ENCODE measurements at regions of chr1 and their contacts with region 1.

Region 1: DNA sequence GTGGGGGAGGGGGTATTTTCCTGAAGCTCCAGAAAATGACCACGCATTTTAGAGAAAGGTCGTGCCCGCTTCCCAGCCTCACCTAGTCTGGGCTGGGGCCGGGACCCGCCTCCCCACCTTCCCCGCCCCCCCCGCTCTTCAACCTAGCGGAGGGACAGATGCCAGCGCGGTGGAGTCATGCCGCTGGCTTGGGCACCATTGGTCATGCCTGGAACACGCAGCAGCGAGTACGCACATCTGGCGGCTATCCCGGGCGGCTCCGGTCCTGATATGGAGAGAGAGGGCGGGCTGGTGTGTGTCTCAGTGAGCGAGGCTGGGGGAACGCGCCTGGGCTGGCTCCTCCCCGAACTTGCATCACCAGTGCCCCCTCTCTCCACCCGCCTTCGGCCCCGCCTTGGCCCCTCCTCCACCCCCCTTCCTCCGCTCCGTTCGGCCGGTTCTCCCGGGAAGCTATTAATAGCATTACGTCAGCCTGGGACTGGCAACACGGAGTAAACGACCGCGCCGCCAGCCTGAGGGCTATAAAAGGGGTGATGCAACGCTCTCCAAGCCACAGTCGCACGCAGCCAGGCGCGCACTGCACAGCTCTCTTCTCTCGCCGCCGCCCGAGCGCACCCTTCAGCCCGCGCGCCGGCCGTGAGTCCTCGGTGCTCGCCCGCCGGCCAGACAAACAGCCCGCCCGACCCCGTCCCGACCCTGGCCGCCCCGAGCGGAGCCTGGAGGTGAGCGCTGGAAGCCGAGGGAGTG is at the start of gene ATF3:
- DNase-seq: peak; percentile 100
- ATAC-seq: peak; percentile 93 to 97 (median 94)
- H3K4me3 ChIP-seq: peak within 1 kb of the TSS; percentile 81
- H3K27ac ChIP-seq: peak within 1 kb of the TSS; percentile 87
- H3K4me1 ChIP-seq: peaks cover 24% of the 10 kb centered on the region
- H3K27me3 ChIP-seq: peaks cover 0 to 38% (median 13%) of the 10 kb centered on the region in 3 donors
- CTCF ChIP-seq: no peak
- total RNA-seq, gene ATF3: 13.5 to 51.3 (median 26.3) TPM

Region 2: GRCh38 chr1:212488397-212489283 is 119.7 kb before region 1 on chr1:
- intact Hi-C with region 1: loop called in 1 of 2 experiments (anchors 10 kb)
- DNase-seq: peak; percentile 43 to 62
- ATAC-seq: peak; percentile 53 to 78 (median 70)
- H3K4me3 ChIP-seq: no peak overlapping the region
- H3K27ac ChIP-seq: peak overlapping the region; percentile 24
- H3K4me1 ChIP-seq: no peaks in the 10 kb centered on the region
- H3K27me3 ChIP-seq: no peaks in the 10 kb centered on the region
- CTCF ChIP-seq: no peak

Region 3: GRCh38 chr1:212558693-212559480 is 49.5 kb before region 1 on chr1:
- intact Hi-C with region 1: loop called in 1 of 2 experiments (anchors 5 kb)
- DNase-seq: peak; percentile 93 to 95
- ATAC-seq: peak; percentile 91 to 97 (median 94)
- H3K4me3 ChIP-seq: peak overlapping the region; percentile 83
- H3K27ac ChIP-seq: peak overlapping the region; percentile 83
- H3K4me1 ChIP-seq: peaks cover 4% of the 10 kb centered on the region
- H3K27me3 ChIP-seq: peaks cover 0 to 2% (median 0%) of the 10 kb centered on the region in 3 donors
- CTCF ChIP-seq: no peak

Region 4: GRCh38 chr1:212566522-212567479 is 41.6 kb before region 1 on chr1:
- intact Hi-C with region 1: loop called (anchors 1 to 5 kb)
- DNase-seq: no peak
- ATAC-seq: peak; percentile 86 to 94 (median 90)
- H3K4me3 ChIP-seq: peak overlapping the region; percentile 75
- H3K27ac ChIP-seq: peak overlapping the region; percentile 76
- H3K4me1 ChIP-seq: peaks cover 15% of the 10 kb centered on the region
- H3K27me3 ChIP-seq: peaks cover 0 to 2% (median 0%) of the 10 kb centered on the region in 3 donors
- CTCF ChIP-seq: no peak

Measured in psoas muscle (tissue), 8 donors.